Activated naive CD8-positive, alpha-beta T cell treated with anti-CD3 and anti-CD28 coated beads, Interleukin-2, amount 10 ng/mL, durations not matched to agents 7 days and 5 days (primary cell): ENCODE measurements at regions of chr11 and their contacts with region 1.

Region 1: GRCh38 chr11:116835791-116836631 is 1.4 kb downstream of the APOA1 start:
- DNase-seq: peak; percentile 89
- ATAC-seq: peak; percentile 94
- H3K4me3 Mint-ChIP-seq: peak overlapping the region; percentile 74
- H3K27ac Mint-ChIP-seq: peak overlapping the region; percentile 83
- H3K4me1 Mint-ChIP-seq: peaks cover 12% of the 10 kb centered on the region
- H3K27me3 Mint-ChIP-seq: peaks cover 4% of the 10 kb centered on the region

Region 2: DNA sequence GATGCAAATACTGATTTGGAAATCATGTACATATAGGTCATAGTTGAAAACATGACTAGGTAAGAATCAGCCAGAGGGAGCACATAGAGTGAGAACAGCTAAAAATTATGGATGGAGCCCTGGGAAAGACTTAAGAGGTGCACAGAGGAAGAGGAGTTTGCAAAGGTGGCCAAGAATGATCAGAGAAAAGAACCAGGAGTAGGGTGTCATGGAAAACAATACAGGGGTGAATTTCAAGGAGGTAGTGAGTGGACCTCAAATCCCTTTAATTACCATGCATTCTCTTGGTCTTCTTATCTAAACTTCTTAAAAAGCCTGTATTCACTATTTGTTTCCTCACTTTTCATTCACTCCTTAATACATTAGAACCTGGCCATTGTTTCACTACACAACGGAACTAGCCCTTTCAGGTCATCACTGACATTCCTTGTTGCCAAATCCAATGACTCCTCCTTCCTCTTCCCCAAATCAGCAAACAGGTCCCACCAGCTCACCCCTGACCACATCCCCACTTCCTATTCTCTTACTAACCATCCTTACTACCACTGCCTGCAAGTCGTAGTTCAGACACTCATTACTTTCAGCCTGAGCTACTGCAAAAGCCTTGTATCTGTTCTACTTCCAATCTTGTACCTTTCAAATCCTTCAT is 85.8 kb before region 1 on chr11:
- POLR2A ChIA-PET with region 1: no interaction called
- DNase-seq: no peak
- ATAC-seq: no peak
- H3K4me3 Mint-ChIP-seq: no peak overlapping the region
- H3K27ac Mint-ChIP-seq: no peak overlapping the region
- H3K4me1 Mint-ChIP-seq: peaks cover 2% of the 10 kb centered on the region
- H3K27me3 Mint-ChIP-seq: no peaks in the 10 kb centered on the region

Region 3: DNA sequence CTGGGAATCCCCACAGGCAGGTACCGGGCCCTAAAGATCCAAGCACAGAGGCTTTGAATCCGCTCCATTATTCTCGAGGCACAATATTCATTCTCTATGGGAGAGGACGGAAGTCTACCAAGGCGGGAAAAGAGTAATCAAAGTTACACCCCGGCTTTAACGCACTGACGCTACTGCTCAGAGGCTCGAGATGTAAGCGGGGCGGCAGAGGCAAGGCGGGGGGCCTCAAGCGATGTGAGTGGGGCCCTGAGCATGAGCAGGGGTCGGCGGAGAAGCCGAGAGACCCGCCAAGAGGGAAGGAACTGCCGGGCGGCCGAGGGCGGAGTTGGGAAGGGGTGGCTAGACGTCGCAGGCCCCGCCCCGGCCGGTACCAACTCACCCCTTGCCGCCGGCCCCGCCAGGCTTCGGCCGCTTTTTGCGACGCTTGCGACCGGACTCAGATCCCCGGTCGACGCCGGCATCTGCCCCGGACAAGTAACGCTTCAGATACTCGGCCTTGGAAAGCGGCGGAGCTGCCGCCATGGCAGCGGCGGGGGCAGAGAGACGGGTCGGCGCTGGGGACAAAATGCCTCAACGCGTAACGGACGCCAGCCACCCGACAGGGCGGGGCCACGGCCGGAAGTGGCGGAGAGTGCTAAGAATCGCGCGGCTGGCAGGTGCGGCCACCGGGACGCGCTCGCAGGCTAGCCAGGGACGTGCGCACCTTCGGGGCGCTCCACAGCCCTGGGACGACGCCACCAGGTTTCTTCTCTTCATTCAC is 63.4 kb before region 1 on chr11 and contains the start of gene BUD13:
- POLR2A ChIA-PET with region 1: interaction called, 16 read pairs
- DNase-seq: peak; percentile 98
- ATAC-seq: peak; percentile 92
- H3K4me3 Mint-ChIP-seq: peak within 1 kb of the TSS; percentile 96
- H3K27ac Mint-ChIP-seq: peak within 1 kb of the TSS; percentile 95
- H3K4me1 Mint-ChIP-seq: peaks cover 34% of the 10 kb centered on the region
- H3K27me3 Mint-ChIP-seq: no peaks in the 10 kb centered on the region
- total RNA-seq, gene BUD13: 32.1 to 33.0 TPM

Region 4: DNA sequence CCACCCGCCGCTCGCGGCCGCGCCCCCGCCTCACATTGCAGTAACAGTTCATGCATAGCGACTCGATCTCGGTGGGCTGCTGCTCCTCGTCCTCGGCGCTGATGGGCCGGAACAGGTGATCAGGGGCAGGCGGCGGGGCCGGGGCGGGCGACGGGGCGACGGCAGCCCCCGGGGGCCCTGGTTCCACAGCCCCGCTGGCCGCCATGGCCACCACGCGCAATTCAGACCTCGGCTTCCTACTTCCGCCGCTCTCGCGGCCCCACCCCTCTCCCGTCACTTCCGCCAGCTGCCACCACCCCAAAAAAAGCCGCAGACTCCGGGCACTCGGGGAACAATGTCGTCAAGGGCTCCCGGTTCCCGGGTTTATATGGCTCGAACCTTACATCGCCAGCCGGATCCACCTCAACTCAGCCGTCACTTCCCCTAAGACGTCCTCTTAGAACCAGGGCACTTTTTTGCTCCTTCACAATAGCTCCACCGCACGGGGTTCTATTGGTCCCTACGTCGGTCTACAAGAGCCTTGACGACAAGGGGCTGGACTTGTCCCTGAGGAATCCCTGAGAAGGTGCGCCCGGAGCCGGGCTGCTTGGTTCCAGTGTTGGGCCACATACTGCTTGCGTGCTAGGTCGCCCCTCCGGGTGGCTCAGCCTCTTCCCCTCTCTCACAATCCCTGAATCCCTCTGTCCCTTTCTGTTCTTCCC is 48.1 kb before region 1 on chr11 and contains the start of gene ZPR1:
- POLR2A ChIA-PET with region 1: interaction called, 79 read pairs
- DNase-seq: peak; percentile 89
- ATAC-seq: peak; percentile 78
- H3K4me3 Mint-ChIP-seq: peak within 1 kb of the TSS; percentile 96
- H3K27ac Mint-ChIP-seq: peak within 1 kb of the TSS; percentile 96
- H3K4me1 Mint-ChIP-seq: peaks cover 27% of the 10 kb centered on the region
- H3K27me3 Mint-ChIP-seq: peaks cover 3% of the 10 kb centered on the region
- total RNA-seq, gene ZPR1: 53.6 to 57.3 TPM

Region 5: GRCh38 chr11:116853461-116854073 is 17.6 kb after region 1 on chr11:
- POLR2A ChIA-PET with region 1: interaction called, 60 read pairs
- DNase-seq: peak; percentile 50
- ATAC-seq: peak; percentile 96
- H3K4me3 Mint-ChIP-seq: peak overlapping the region; percentile 84
- H3K27ac Mint-ChIP-seq: peak overlapping the region; percentile 98
- H3K4me1 Mint-ChIP-seq: peaks cover 56% of the 10 kb centered on the region
- H3K27me3 Mint-ChIP-seq: no peaks in the 10 kb centered on the region

Region 6: DNA sequence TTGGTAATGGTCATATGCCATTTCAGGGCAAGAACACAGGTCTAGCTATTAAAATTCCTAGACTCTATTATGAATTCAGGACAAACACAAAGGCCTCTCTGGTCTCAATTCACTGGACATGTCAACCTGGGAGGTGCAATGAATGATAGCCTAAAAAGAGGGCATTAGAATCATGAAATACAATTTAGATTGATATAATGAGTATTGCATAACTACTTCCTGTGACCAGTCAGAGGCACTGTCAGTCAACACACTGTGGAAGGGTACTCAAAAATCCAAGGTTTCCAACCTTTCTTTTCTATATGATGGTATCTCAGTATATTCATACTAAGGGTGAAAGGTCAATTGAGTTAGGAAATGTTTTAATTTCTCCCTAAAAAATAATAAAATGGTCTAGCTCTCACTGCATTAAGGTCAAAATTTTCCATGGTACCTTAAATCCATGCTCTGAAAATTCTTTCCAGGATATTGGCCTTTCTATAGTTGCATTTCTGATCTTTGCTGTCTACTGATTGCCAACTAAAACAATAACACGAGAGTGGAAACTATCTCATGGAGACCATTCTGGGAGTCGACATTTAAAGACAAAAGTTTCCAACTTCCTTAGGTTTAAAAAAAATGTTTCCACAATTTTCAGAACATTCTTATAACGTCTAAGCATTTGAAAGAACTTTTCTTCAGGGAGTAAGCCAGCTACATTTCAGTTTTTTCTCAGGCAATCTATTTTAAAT is 83.1 kb after region 1 on chr11:
- POLR2A ChIA-PET with region 1: no interaction called
- DNase-seq: no peak
- ATAC-seq: no peak
- H3K4me3 Mint-ChIP-seq: no peak overlapping the region
- H3K27ac Mint-ChIP-seq: no peak overlapping the region
- H3K4me1 Mint-ChIP-seq: peaks cover 10% of the 10 kb centered on the region
- H3K27me3 Mint-ChIP-seq: no peaks in the 10 kb centered on the region

Region 7: GRCh38 chr11:117098269-117099232 is 262.5 kb after region 1 on chr11 and contains the start of gene SIK3:
- POLR2A ChIA-PET with region 1: interaction called, 15 read pairs
- DNase-seq: peak; percentile 95
- ATAC-seq: peak; percentile 71
- H3K4me3 Mint-ChIP-seq: peak within 1 kb of the TSS; percentile 93
- H3K27ac Mint-ChIP-seq: peak within 1 kb of the TSS; percentile 93
- H3K4me1 Mint-ChIP-seq: peaks cover 38% of the 10 kb centered on the region
- H3K27me3 Mint-ChIP-seq: no peaks in the 10 kb centered on the region
- total RNA-seq, gene SIK3: 44.7 to 45.8 TPM